ENCODE measurements at regions of chr20 and their contacts with region 1.

Region 1: DNA sequence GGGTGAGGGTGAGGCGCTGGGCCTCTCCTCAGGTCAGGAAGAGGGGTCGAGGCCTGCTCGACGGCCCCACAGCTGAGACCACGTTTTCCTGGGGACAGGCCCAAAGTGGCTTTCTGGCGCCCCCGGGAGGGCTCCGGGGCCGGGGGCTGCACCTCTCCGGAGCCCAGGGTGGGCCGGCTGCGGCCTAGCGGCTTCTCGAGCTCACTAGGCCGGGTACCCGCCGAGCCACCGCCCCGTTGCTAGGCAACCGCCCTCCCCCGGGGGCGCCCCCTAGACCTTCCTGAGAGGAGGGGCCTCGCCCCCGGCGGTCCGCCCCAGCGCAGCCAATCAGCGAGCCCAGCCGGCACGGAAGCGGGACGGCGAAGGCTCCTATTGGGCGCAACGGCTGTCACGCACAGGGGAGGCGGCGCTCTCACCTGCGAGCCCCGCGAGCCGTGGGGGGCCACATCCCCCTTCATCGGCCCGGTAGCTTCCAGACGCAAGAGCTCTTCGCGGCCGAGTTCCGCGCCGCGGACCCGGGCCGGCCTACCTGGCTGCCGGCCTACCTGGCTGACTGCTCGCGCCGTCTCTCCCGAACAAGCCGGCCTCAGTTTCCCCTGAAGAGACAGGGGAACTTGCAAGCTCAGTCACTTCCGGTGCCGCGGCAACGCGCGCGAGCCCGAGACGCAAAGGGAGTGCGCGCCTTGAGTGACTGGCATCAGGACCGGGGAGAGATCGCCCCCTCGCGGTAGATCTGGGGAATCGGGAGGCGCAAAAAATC is 831 bp upstream of the BCL2L1 start:
- DNase-seq: peak; percentile 97
- H3K4me3 Mint-ChIP-seq: peak overlapping the region; percentile 97
- H3K27ac Mint-ChIP-seq: peak overlapping the region; percentile 93
- H3K4me1 Mint-ChIP-seq: peaks cover 20% of the 10 kb centered on the region
- H3K27me3 Mint-ChIP-seq: no peaks in the 10 kb centered on the region

Region 2: DNA sequence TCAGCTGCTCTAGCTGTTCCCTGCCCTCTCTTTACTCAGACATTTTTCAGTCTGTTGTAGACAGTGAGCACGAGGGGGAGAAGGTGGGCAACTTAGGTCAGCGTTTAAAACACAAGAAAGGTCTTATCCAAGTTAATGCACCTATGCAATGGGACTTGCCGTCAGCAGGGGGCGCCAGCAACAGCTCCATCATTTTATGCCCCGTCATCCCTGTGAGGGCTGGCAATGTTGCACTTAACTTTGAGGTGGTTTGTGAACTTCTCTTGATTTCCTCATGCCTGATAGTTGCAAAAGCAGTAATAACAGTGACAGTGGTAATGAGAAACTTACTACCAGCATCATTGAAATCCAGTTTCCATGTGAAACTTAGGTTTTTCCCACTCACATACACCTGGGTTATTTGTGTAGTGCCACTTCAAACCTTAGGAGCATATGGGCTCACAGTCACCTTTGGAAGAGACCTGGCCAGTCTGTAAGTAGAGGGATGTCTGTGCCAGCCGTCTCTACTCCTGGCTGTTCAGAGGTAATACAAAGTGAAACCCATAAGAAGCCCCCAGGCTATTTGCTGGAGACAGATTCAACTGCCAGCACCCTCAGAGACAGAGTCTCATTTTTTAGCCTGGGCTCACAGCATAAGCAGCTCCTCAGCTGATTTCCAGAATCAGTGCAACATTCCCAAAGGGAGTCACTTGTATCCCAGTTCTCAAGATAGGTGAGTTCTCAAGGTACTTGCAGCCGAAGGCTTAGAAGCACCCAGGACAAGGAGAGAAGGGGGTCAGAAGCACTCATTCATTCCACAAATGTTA is 163.2 kb before region 1 on chr20:
- intact Hi-C with region 1: loop called (anchors 1 kb)
- DNase-seq: peak; percentile 59
- H3K4me3 Mint-ChIP-seq: no peak overlapping the region
- H3K27ac Mint-ChIP-seq: peak overlapping the region; percentile 74
- H3K4me1 Mint-ChIP-seq: peaks cover 25% of the 10 kb centered on the region
- H3K27me3 Mint-ChIP-seq: no peaks in the 10 kb centered on the region

Region 3: GRCh38 chr20:31605031-31605901 is 118.2 kb before region 1 on chr20 and contains the start of gene ID1:
- intact Hi-C with region 1: loop called (anchors 1 kb)
- DNase-seq: peak; percentile 87
- H3K4me3 Mint-ChIP-seq: peak within 1 kb of the TSS; percentile 91
- H3K27ac Mint-ChIP-seq: peak within 1 kb of the TSS; percentile 65
- H3K4me1 Mint-ChIP-seq: peaks cover 35% of the 10 kb centered on the region
- H3K27me3 Mint-ChIP-seq: peaks cover 54% of the 10 kb centered on the region
- total RNA-seq, gene ID1: 3.4 and 4.0 TPM in 2 replicates

Region 4: GRCh38 chr20:31661625-31662371 is 61.7 kb before region 1 on chr20:
- intact Hi-C with region 1: loop called (anchors 1 kb)
- DNase-seq: peak; percentile 66
- H3K4me3 Mint-ChIP-seq: peak overlapping the region; percentile 72
- H3K27ac Mint-ChIP-seq: peak overlapping the region; percentile 88
- H3K4me1 Mint-ChIP-seq: peaks cover 54% of the 10 kb centered on the region
- H3K27me3 Mint-ChIP-seq: no peaks in the 10 kb centered on the region

Region 5: GRCh38 chr20:31698803-31699718 is 24.4 kb before region 1 on chr20:
- intact Hi-C with region 1: loop called (anchors 1 kb)
- DNase-seq: peak; percentile 33
- H3K4me3 Mint-ChIP-seq: peak overlapping the region; percentile 75
- H3K27ac Mint-ChIP-seq: peak overlapping the region; percentile 87
- H3K4me1 Mint-ChIP-seq: peaks cover 75% of the 10 kb centered on the region
- H3K27me3 Mint-ChIP-seq: no peaks in the 10 kb centered on the region

Region 6: DNA sequence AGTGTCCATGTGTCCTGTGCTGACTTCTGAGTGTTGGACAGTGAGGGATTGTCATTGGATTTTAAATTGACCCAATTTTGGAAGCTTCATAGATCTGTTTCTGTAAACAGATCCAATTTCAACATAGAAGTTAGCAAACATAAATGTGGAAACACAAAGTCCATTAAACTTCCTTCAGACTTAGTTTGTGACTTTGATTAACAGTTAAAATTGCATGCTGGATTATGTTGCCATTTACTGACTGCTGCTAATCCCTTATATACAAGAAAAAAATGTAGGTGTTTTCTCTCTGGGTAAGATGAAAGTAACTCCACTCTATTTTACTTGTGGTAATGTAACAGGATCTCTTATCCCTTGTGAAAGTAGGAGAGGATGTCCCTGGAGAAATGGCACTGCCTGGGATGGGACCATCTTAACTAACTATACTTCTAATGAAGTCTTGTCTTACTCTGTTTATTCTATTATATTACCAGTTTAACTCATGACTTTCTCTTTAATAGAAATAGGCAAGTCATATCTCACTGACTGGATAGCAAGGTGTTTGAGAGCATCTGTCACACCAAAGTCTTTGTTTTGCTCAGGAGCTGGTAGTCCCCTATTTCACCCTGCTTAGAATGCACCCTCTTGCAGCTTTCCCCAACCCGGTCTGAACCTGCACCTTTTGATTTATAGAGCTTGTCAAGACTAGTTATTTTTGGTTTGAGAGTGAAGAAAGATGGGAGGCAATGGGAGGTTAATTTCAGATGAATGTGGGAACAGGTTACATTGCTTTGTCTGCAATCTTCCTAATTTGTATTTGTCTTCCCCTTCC is 22.8 kb after region 1 on chr20:
- intact Hi-C with region 1: no loop called
- DNase-seq: no peak
- H3K4me3 Mint-ChIP-seq: no peak overlapping the region
- H3K27ac Mint-ChIP-seq: no peak overlapping the region
- H3K4me1 Mint-ChIP-seq: peaks cover 37% of the 10 kb centered on the region
- H3K27me3 Mint-ChIP-seq: no peaks in the 10 kb centered on the region

Region 7: DNA sequence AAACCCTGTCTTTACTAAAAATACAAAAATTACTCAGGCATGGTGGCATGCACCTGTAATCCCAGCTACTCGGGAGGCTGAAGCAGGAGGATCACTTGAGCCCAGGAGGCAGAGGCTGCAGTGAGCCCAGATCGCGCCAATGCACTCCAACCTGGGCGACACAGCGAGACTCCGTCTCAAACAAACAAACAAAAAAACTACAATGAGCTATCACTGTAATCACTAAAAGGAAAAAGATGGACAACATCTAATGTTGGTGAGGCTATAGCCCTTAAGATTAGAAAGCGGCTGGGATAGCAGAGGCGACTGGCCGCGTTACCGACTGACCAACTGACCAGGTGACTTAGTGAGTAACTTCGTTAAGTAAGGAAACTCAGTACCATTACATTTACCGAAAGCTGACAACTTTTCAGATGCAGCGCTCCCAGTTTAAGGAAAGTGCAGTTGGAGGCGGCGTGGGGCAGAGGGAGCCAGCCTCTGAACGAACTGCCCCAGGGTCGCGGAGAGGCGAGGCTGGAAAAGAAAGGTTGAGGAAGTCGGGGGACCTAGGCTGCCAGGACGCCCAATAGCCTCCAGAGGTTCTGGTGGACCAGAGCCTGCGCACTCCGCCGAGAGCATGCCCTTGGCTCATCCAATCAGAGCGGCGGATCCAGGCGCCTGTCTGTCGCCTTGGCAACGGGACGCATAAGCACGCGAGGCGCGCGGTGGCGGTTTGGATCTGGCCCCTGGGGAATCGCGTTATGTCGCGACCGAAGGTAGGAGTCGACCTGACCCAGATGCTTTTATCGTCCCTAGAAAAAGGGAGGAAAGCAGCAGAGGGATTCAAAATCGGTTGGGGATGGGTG is 155.9 kb after region 1 on chr20:
- intact Hi-C with region 1: loop called (anchors 2 kb)
- DNase-seq: peak; percentile 78
- H3K4me3 Mint-ChIP-seq: peak overlapping the region; percentile 92
- H3K27ac Mint-ChIP-seq: peak overlapping the region; percentile 77
- H3K4me1 Mint-ChIP-seq: peaks cover 24% of the 10 kb centered on the region
- H3K27me3 Mint-ChIP-seq: peaks cover 27% of the 10 kb centered on the region

Region 8: GRCh38 chr20:32207626-32208498 is 484.4 kb after region 1 on chr20 and contains the starts of genes PLAGL2 and POFUT1:
- intact Hi-C with region 1: loop called (anchors 5 kb)
- DNase-seq: peak; percentile 90
- H3K4me3 Mint-ChIP-seq: peak within 1 kb of the TSS; percentile 100
- H3K27ac Mint-ChIP-seq: peak within 1 kb of the TSS; percentile 93
- H3K4me1 Mint-ChIP-seq: peaks cover 81% of the 10 kb centered on the region
- H3K27me3 Mint-ChIP-seq: no peaks in the 10 kb centered on the region
- total RNA-seq, gene PLAGL2: 123 and 126 TPM in 2 replicates
- total RNA-seq, gene POFUT1: 69.0 and 73.0 TPM in 2 replicates

Region 9: GRCh38 chr20:32982617-32983458 is 1259.3 kb after region 1 on chr20:
- intact Hi-C with region 1: no loop called
- DNase-seq: no peak
- H3K4me3 Mint-ChIP-seq: no peak overlapping the region
- H3K27ac Mint-ChIP-seq: no peak overlapping the region
- H3K4me1 Mint-ChIP-seq: no peaks in the 10 kb centered on the region
- H3K27me3 Mint-ChIP-seq: no peaks in the 10 kb centered on the region